ENCODE measurements at regions of chr18 and their contacts with region 1.

Region 1: GRCh38 chr18:29154758-29155725 is 978.1 kb upstream of the CDH2 start:
- DNase-seq: no peak
- ATAC-seq: no peak
- H3K4me3 Mint-ChIP-seq: no peak overlapping the region
- H3K27ac Mint-ChIP-seq: no peak overlapping the region
- H3K4me1 Mint-ChIP-seq: no peaks in the 10 kb centered on the region
- H3K27me3 Mint-ChIP-seq: no peaks in the 10 kb centered on the region

Region 2: GRCh38 chr18:28916456-28916855 is 238.6 kb before region 1 on chr18:
- CTCF ChIA-PET with region 1: no interaction called
- POLR2A ChIA-PET with region 1: no interaction called
- intact Hi-C with region 1: no loop called
- DNase-seq: no peak
- ATAC-seq: no peak
- H3K4me3 Mint-ChIP-seq: no peak overlapping the region
- H3K27ac Mint-ChIP-seq: no peak overlapping the region
- H3K4me1 Mint-ChIP-seq: no peaks in the 10 kb centered on the region
- H3K27me3 Mint-ChIP-seq: no peaks in the 10 kb centered on the region

Region 3: GRCh38 chr18:29218091-29218490 is 63.0 kb after region 1 on chr18:
- CTCF ChIA-PET with region 1: no interaction called
- POLR2A ChIA-PET with region 1: no interaction called
- intact Hi-C with region 1: loop called in 1 of 2 experiments (anchors 10 kb)
- DNase-seq: no peak
- ATAC-seq: no peak
- H3K4me3 Mint-ChIP-seq: no peak overlapping the region
- H3K27ac Mint-ChIP-seq: no peak overlapping the region
- H3K4me1 Mint-ChIP-seq: no peaks in the 10 kb centered on the region
- H3K27me3 Mint-ChIP-seq: no peaks in the 10 kb centered on the region

Measured in activated CD4-positive, alpha-beta T cell treated with anti-CD3 and anti-CD28 coated beads for 36 hours (primary cell).